Lower leg skin (tissue), 4 donors: ENCODE measurements at regions of chr11 and their contacts with region 1.

Region 1: GRCh38 chr11:33970984-33971466 is 79.1 kb upstream of the LMO2 start:
- DNase-seq: peak; percentile 37 to 85
- H3K4me3 ChIP-seq: no peak overlapping the region
- CTCF ChIP-seq: peak in 1 of 3 donors; percentile 63
- POLR2A ChIP-seq: no peak

Region 2: DNA sequence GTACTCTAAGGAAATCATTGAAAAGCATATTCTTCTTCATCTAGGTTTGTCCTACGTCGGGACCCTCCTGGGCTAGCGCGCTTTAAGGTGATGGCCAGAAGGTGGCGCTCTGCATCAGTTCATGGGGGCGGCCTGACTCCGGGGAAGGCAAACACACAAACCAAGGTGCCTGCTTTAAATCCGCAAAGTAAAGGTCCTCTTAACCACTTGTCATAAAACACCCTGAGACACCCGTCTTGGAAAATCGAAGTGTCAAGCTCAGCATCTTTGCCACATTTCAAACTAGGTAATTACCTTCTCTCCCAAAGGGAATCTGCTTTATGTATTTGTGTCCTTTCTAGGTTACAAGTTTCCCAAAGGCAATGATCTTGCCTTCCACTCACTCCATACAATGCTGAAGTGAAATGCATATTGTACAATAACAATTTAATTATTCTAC is 113.1 kb before region 1 on chr11:
- intact Hi-C with region 1: loop called (anchors 5 kb)
- DNase-seq: peak; percentile 67 to 96
- H3K4me3 ChIP-seq: no peak overlapping the region
- CTCF ChIP-seq: peak in 1 of 3 donors; percentile 65
- POLR2A ChIP-seq: no peak